A673 (cell line): ENCODE measurements at regions of chr19 and their contacts with region 1.

Region 1: GRCh38 chr19:6500837-6501739 is 1.0 kb downstream of the TUBB4A start:
- DNase-seq: no peak
- H3K4me3 ChIP-seq: peak overlapping the region; percentile 78
- H3K27ac ChIP-seq: no peak overlapping the region
- H3K4me1 ChIP-seq: peaks cover 9% of the 10 kb centered on the region
- H3K27me3 ChIP-seq: no peaks in the 10 kb centered on the region
- CTCF ChIP-seq: no peak

Region 2: GRCh38 chr19:6064336-6065073 is 436.6 kb before region 1 on chr19:
- CTCF ChIA-PET with region 1: no interaction called
- POLR2A ChIA-PET with region 1: no interaction called
- intact Hi-C with region 1: no loop called
- DNase-seq: no peak
- H3K4me3 ChIP-seq: no peak overlapping the region
- H3K27ac ChIP-seq: no peak overlapping the region
- H3K4me1 ChIP-seq: peaks cover 10% of the 10 kb centered on the region
- H3K27me3 ChIP-seq: no peaks in the 10 kb centered on the region
- CTCF ChIP-seq: no peak

Region 3: GRCh38 chr19:6489278-6490061 is 11.6 kb before region 1 on chr19:
- CTCF ChIA-PET with region 1: interaction called, 4 read pairs
- POLR2A ChIA-PET with region 1: interaction called, 18 read pairs
- intact Hi-C with region 1: no loop called
- DNase-seq: no peak
- H3K4me3 ChIP-seq: no peak overlapping the region
- H3K27ac ChIP-seq: no peak overlapping the region
- H3K4me1 ChIP-seq: no peaks in the 10 kb centered on the region
- H3K27me3 ChIP-seq: no peaks in the 10 kb centered on the region
- CTCF ChIP-seq: no peak

Region 4: DNA sequence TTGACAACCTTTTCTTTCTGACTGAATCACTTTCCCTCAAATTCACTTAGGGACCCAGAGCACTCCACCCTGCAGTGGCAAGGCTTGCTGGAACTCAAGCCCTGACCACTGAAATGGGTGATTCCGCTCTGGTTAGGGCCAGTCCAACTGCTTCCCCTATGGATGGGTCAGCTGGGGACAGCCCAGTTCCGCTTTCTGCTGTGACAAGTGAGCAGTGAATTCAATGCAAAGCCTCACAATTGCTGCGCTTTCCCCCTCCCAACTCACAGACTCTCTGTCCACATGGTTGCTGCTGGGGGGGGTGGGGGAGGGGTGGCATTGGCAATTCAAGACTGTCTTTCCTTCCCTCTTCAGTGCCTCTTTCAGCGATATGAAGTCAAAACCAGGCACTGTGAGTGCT is 71.1 kb after region 1 on chr19:
- CTCF ChIA-PET with region 1: interaction called, 10 read pairs
- POLR2A ChIA-PET with region 1: no interaction called
- intact Hi-C with region 1: no loop called
- DNase-seq: no peak
- H3K4me3 ChIP-seq: no peak overlapping the region
- H3K27ac ChIP-seq: no peak overlapping the region
- H3K4me1 ChIP-seq: peaks cover 13% of the 10 kb centered on the region
- H3K27me3 ChIP-seq: no peaks in the 10 kb centered on the region
- CTCF ChIP-seq: no peak

Region 5: DNA sequence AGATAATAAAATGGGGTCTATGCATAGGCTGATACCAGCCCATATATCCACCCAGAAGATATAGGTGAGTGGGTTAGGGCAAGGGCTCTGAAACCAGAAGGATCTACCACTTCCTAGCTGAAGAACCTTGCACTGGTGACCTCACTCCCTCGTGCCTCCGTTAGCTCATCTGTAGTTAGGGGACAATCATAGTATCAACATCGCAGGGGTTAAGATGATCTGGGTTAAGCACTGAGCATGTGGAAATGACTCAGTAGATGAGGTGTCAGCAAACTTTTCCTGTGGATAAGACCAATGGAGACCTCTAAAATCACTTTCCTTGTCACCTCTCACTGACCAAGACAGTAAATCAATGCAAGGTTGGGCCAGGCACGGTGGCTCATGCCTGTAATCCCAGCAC is 138.4 kb after region 1 on chr19:
- CTCF ChIA-PET with region 1: no interaction called
- POLR2A ChIA-PET with region 1: no interaction called
- intact Hi-C with region 1: no loop called
- DNase-seq: no peak
- H3K4me3 ChIP-seq: no peak overlapping the region
- H3K27ac ChIP-seq: no peak overlapping the region
- H3K4me1 ChIP-seq: no peaks in the 10 kb centered on the region
- H3K27me3 ChIP-seq: no peaks in the 10 kb centered on the region
- CTCF ChIP-seq: no peak